ENCODE measurements at regions of chr1 and their contacts with region 1.

Region 1: DNA sequence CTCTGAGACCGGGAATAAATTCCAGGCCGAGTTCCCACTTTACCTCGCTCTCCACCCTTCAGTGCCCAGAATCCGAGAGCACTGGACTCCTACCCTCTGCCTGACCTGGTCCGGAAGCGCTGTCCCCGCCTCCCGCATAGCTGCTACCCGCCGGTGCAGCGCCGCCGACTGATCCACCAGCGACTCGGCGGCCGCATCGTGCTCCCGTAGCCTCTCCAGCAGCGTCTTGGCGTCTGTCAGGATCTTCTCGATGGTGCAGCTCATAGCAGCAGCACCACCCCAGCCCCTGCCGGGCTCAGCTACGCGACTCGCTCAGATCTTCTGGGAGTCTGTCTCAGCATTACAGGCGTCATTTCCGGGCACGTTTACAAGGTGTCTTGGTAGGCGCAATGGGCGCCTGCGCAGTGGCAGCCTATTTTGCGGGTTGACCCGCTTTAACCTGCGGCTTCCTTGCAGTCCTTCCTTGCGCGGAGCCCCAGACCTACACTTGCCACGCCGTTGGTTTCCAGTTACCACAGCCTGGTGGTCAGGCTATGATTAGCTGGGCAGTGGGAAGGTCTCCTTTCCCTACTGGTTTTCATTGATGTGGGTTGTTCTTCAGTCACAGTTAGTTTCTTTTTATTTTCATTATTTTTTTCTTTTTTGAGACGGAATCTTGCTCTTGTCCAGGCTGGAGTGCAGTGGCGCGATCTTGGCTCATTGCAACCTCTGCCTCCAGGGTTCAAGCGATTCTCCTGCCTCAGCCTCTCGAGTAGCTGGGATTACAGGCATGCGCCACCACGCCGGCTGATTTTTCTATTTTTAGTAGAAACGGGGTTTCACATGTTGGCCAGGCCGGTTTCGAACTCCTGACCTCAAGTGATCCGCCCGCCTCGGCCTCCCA is at the start of gene SIKE1:
- DNase-seq: peak; percentile 89 to 98
- ATAC-seq: peak; percentile 95 to 98 (median 96)
- H3K4me3 ChIP-seq: peak within 1 kb of the TSS; percentile 76
- H3K4me3 Mint-ChIP-seq: peak within 1 kb of the TSS; percentile 100
- H3K27ac ChIP-seq: peak within 1 kb of the TSS; percentile 78
- H3K27ac Mint-ChIP-seq: peak within 1 kb of the TSS; percentile 100
- H3K4me1 ChIP-seq: peaks cover 5% of the 10 kb centered on the region
- H3K4me1 Mint-ChIP-seq: peaks cover 25 to 35% of the 10 kb centered on the region in 2 donors
- H3K27me3 ChIP-seq: no peaks in the 10 kb centered on the region
- H3K27me3 Mint-ChIP-seq: peaks cover 6 to 12% of the 10 kb centered on the region in 2 donors
- CTCF ChIP-seq: no peak
- total RNA-seq, gene SIKE1: 53.3 to 57.5 (median 53.4) TPM

Region 2: GRCh38 chr1:114540202-114540601 is 240.4 kb before region 1 on chr1:
- intact Hi-C with region 1: no loop called
- DNase-seq: no peak
- ATAC-seq: no peak
- H3K4me3 ChIP-seq: no peak overlapping the region
- H3K4me3 Mint-ChIP-seq: no peak overlapping the region
- H3K27ac ChIP-seq: no peak overlapping the region
- H3K27ac Mint-ChIP-seq: no peak overlapping the region
- H3K4me1 ChIP-seq: no peaks in the 10 kb centered on the region
- H3K4me1 Mint-ChIP-seq: no peaks in the 10 kb centered on the region
- H3K27me3 ChIP-seq: no peaks in the 10 kb centered on the region
- H3K27me3 Mint-ChIP-seq: peaks cover 6 to 7% of the 10 kb centered on the region in 2 donors
- CTCF ChIP-seq: no peak

Region 3: GRCh38 chr1:114716304-114717170 is 64.0 kb before region 1 on chr1 and contains the start of gene NRAS:
- intact Hi-C with region 1: loop called (anchors 1 kb)
- DNase-seq: peak; percentile 97
- ATAC-seq: peak; percentile 93 to 99 (median 96)
- H3K4me3 ChIP-seq: peak within 1 kb of the TSS; percentile 89
- H3K4me3 Mint-ChIP-seq: peak within 1 kb of the TSS; percentile 97
- H3K27ac ChIP-seq: peak within 1 kb of the TSS; percentile 96
- H3K27ac Mint-ChIP-seq: peak within 1 kb of the TSS; percentile 98 to 99
- H3K4me1 ChIP-seq: peaks cover 13% of the 10 kb centered on the region
- H3K4me1 Mint-ChIP-seq: peaks cover 25% of the 10 kb centered on the region in 2 donors
- H3K27me3 ChIP-seq: no peaks in the 10 kb centered on the region
- H3K27me3 Mint-ChIP-seq: no peaks in the 10 kb centered on the region
- CTCF ChIP-seq: no peak
- total RNA-seq, gene NRAS: 41.1 to 45.7 (median 43.8) TPM

Region 4: GRCh38 chr1:114861384-114861783 is 80.8 kb after region 1 on chr1:
- intact Hi-C with region 1: no loop called
- DNase-seq: no peak
- ATAC-seq: no peak
- H3K4me3 ChIP-seq: no peak overlapping the region
- H3K4me3 Mint-ChIP-seq: no peak overlapping the region
- H3K27ac ChIP-seq: no peak overlapping the region
- H3K27ac Mint-ChIP-seq: no peak overlapping the region
- H3K4me1 ChIP-seq: no peaks in the 10 kb centered on the region
- H3K4me1 Mint-ChIP-seq: no peaks in the 10 kb centered on the region
- H3K27me3 ChIP-seq: peaks cover 12% of the 10 kb centered on the region
- H3K27me3 Mint-ChIP-seq: peaks cover 6 to 29% of the 10 kb centered on the region in 2 donors
- CTCF ChIP-seq: no peak

Region 5: GRCh38 chr1:115098979-115099692 is 318.6 kb after region 1 on chr1:
- intact Hi-C with region 1: loop called (anchors 10 kb)
- DNase-seq: peak; percentile 57 to 94
- ATAC-seq: peak; percentile 88 to 95 (median 93)
- H3K4me3 ChIP-seq: peak overlapping the region; percentile 65
- H3K4me3 Mint-ChIP-seq: peak overlapping the region; percentile 93
- H3K27ac ChIP-seq: peak overlapping the region; percentile 95
- H3K27ac Mint-ChIP-seq: peak overlapping the region; percentile 99
- H3K4me1 ChIP-seq: peaks cover 20% of the 10 kb centered on the region
- H3K4me1 Mint-ChIP-seq: peaks cover 34 to 44% of the 10 kb centered on the region in 2 donors
- H3K27me3 ChIP-seq: no peaks in the 10 kb centered on the region
- H3K27me3 Mint-ChIP-seq: no peaks in the 10 kb centered on the region
- CTCF ChIP-seq: no peak

Region 6: GRCh38 chr1:115142616-115143015 is 362.0 kb after region 1 on chr1:
- intact Hi-C with region 1: no loop called
- DNase-seq: no peak
- ATAC-seq: no peak
- H3K4me3 ChIP-seq: no peak overlapping the region
- H3K4me3 Mint-ChIP-seq: no peak overlapping the region
- H3K27ac ChIP-seq: no peak overlapping the region
- H3K27ac Mint-ChIP-seq: no peak overlapping the region
- H3K4me1 ChIP-seq: peaks cover 4% of the 10 kb centered on the region
- H3K4me1 Mint-ChIP-seq: peaks cover 8 to 9% of the 10 kb centered on the region in 2 donors
- H3K27me3 ChIP-seq: no peaks in the 10 kb centered on the region
- H3K27me3 Mint-ChIP-seq: peaks cover 56 to 58% of the 10 kb centered on the region in 2 donors
- CTCF ChIP-seq: no peak

Measured in natural killer cell (primary cell).